H1 (cell line): ENCODE measurements at regions of chr4 and their contacts with region 1.

Region 1: GRCh38 chr4:69470561-69470960 is 25.1 kb downstream of the UGT2B4 start:
- DNase-seq: no peak
- H3K4me3 ChIP-seq: no peak overlapping the region
- H3K27ac ChIP-seq: no peak overlapping the region
- H3K4me1 ChIP-seq: no peaks in the 10 kb centered on the region
- H3K27me3 ChIP-seq: no peaks in the 10 kb centered on the region
- CTCF ChIP-seq: peak in 1 of 3 experiments; percentile 50; a peak in 1 of 4 replicates
- EP300 ChIP-seq: no peak
- POLR2A ChIP-seq: no peak
- RAD21 ChIP-seq: peak in 1 of 2 experiments; percentile 33; a peak in 1 of 4 replicates

Region 2: GRCh38 chr4:69104719-69105275 is 365.8 kb before region 1 on chr4:
- CTCF ChIA-PET with region 1: no interaction called
- POLR2A ChIA-PET with region 1: no interaction called
- DNase-seq: no peak
- H3K4me3 ChIP-seq: no peak overlapping the region
- H3K27ac ChIP-seq: no peak overlapping the region
- H3K4me1 ChIP-seq: no peaks in the 10 kb centered on the region
- H3K27me3 ChIP-seq: no peaks in the 10 kb centered on the region
- CTCF ChIP-seq: no peak
- EP300 ChIP-seq: no peak
- POLR2A ChIP-seq: no peak
- RAD21 ChIP-seq: no peak

Region 3: DNA sequence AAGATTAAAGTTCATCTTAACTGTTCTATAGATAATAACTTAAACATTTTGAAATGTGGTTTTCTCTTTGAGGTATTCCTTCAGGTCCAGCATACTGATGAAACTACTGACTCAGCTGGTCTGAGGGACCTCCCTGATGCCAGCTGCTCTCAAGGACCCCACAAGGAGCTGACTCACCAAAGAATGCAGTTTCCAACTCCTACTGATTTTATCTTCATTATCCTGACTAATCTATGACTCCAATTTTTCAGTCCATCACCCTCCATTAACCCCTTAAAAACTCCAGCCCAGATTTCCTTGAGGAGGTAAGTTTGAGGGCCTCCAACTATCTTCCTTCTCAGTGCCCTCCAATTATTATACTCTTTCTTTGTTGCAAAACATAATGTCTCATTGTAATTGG is 26.5 kb after region 1 on chr4:
- CTCF ChIA-PET with region 1: interaction called, 10 read pairs
- POLR2A ChIA-PET with region 1: no interaction called
- DNase-seq: no peak
- H3K4me3 ChIP-seq: no peak overlapping the region
- H3K27ac ChIP-seq: no peak overlapping the region
- H3K4me1 ChIP-seq: no peaks in the 10 kb centered on the region
- H3K27me3 ChIP-seq: no peaks in the 10 kb centered on the region
- CTCF ChIP-seq: no peak
- EP300 ChIP-seq: no peak
- POLR2A ChIP-seq: no peak
- RAD21 ChIP-seq: no peak

Region 4: DNA sequence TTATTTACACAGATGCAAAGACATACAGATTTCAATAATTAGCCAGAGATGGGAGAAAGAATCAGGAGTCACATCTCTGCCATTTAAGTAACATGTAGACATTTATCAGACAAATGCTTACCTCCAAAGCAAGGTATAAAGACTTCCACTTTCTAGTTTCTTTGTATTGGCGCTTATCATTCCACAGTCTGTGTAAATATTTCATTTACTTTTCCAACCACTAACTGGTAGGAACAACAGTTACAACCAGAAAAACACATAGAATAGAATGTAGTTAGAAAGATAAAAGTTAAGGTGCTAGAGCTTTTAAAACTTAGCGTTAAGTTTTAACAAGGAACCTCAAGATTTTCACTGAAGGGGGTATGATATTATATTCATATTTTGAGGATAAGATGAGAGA is 66.0 kb after region 1 on chr4:
- CTCF ChIA-PET with region 1: no interaction called
- POLR2A ChIA-PET with region 1: no interaction called
- DNase-seq: no peak
- H3K4me3 ChIP-seq: no peak overlapping the region
- H3K27ac ChIP-seq: no peak overlapping the region
- H3K4me1 ChIP-seq: no peaks in the 10 kb centered on the region
- H3K27me3 ChIP-seq: no peaks in the 10 kb centered on the region
- CTCF ChIP-seq: no peak
- EP300 ChIP-seq: no peak
- POLR2A ChIP-seq: no peak
- RAD21 ChIP-seq: no peak